ENCODE measurements at regions of chrX and their contacts with region 1.

Region 1: GRCh38 chrX:5549512-5549911 is 679.2 kb downstream of the NLGN4X start:
- DNase-seq: peak; percentile 10
- H3K4me3 ChIP-seq: no peak overlapping the region
- H3K27ac ChIP-seq: no peak overlapping the region
- H3K4me1 ChIP-seq: no peaks in the 10 kb centered on the region
- H3K27me3 ChIP-seq: no peaks in the 10 kb centered on the region
- CTCF ChIP-seq: no peak

Region 2: GRCh38 chrX:4560192-4560591 is 989.3 kb before region 1 on chrX:
- CTCF ChIA-PET with region 1: no interaction called
- POLR2A ChIA-PET with region 1: interaction called, 11 read pairs
- intact Hi-C with region 1: no loop called
- DNase-seq: no peak
- H3K4me3 ChIP-seq: no peak overlapping the region
- H3K27ac ChIP-seq: no peak overlapping the region
- H3K4me1 ChIP-seq: no peaks in the 10 kb centered on the region
- H3K27me3 ChIP-seq: no peaks in the 10 kb centered on the region
- CTCF ChIP-seq: no peak

Region 3: DNA sequence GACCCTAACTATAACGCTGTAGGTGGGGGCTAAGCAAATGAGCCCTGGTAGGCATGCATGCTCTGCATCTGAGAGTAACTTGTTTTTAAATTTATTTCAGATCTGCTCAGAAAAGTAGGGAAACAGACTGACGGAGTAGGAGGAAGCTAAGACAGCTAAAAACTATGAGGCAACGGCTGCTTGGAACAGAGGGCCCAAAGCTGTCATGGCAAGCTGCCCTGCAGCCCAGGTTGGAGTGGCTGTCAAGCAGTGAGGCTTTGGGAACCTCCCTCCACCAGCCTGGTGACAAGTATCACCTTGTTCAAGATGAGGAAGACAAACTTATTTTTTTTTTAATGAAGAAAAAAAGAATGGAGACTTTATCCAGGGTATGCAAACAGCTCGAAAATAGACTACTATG is 239.4 kb after region 1 on chrX:
- CTCF ChIA-PET with region 1: no interaction called
- POLR2A ChIA-PET with region 1: no interaction called
- intact Hi-C with region 1: no loop called
- DNase-seq: no peak
- H3K4me3 ChIP-seq: no peak overlapping the region
- H3K27ac ChIP-seq: no peak overlapping the region
- H3K4me1 ChIP-seq: no peaks in the 10 kb centered on the region
- H3K27me3 ChIP-seq: no peaks in the 10 kb centered on the region
- CTCF ChIP-seq: no peak

Measured in A673 (cell line).